ENCODE measurements at regions of chr9 and their contacts with region 1.

Region 1: GRCh38 chr9:20356403-20357035 is 265.8 kb downstream of the MLLT3 start:
- DNase-seq: peak; percentile 48
- CTCF ChIP-seq: peak; percentile 79

Region 2: GRCh38 chr9:20941174-20941690 is 584.7 kb after region 1 on chr9:
- in situ Hi-C with region 1: loop called (anchors 25 kb)
- DNase-seq: peak; percentile 54
- CTCF ChIP-seq: peak; percentile 83

Region 3: DNA sequence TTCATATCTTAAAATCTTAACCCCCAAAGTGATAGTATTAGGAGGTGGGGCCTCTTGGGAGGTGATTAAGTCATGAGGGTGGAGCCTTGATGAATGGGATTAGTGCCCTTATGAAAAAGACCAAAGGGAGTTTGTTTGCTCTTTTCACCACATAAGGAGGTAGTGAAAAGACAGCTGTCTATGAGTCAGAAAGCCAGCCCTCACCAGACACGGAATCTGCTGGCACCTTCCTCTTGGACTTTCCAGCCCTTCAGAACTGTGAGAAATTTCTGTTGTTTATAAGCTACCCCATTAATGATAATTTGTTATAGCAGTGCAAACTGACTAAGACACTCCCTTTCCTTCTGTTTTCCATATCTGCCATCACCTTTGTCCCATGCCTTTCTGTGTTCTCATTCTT is 700.4 kb after region 1 on chr9:
- in situ Hi-C with region 1: no loop called
- DNase-seq: no peak
- CTCF ChIP-seq: no peak

Region 4: DNA sequence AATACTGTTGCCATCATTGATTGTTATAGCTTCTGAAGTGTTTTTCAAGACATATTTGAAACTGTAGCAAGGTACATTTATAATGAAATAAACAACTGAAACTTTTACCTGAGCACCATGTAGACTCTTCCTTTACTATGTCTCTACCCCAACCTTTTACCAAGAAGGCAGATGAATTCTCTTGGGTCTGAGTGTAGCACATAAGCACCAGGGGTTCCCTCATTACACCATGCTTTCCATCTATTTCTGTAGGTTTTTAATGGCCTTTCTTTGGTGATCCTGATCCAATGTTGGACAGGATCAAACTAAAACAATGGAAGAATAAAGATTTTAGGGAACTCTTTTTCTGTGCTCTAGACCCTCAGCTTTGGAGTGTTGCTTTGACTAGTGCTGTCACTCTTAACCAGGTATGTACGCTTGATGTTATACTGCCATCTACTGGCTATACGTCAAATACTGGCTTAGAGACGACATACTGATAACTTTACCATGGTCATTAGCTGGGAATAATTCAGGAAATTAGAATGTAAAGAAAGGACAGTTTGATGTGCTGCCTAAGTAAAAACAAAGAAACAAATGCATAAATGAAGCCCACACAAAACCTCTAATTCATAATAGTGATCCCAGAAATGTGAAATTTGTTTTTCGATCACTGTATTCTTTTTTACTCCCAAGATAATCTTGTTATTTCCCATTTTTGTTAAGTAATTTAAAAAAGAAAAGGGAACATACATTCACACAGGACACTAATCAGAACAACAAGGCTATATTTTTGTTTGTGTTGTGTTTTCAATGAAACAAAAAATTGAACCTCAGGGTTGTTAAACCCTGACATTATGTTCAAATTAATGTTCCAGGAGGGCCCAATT is 754.4 kb after region 1 on chr9:
- in situ Hi-C with region 1: loop called (anchors 25 kb)
- DNase-seq: peak; percentile 57
- CTCF ChIP-seq: peak; percentile 75